ENCODE measurements at regions of chr11 and their contacts with region 1.

Region 1: DNA sequence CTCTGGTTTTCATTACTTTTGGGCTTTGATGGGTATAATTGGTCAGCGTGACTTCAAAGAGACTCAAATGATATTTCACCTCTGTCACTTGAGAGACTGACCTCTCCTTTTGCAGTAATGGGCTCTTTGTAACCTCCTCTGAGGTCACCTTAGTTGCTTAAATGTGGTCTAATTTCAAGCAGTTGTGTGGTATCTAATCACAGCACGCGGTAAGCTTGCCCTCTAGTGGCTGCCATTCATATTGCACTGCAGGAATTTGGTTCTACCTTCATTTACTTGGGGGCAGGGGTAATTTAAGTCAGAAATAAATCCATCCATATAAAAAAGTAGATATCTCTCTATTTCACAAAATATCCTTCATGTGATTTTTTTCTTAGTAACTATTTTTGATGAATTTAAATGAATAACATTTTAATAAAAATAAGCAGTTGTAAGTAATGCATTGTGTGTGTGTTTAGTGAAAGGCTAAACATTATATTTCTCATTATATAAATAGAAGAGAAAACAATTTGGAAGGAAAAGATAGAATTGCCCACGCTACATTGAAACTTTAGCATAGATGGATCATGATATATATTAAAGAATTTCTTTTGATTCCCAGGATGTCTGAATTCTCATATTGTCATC is 55.0 kb upstream of the ANO3 start:
- DNase-seq: peak; percentile 56
- H3K4me3 Mint-ChIP-seq: no peak overlapping the region
- H3K27ac Mint-ChIP-seq: no peak overlapping the region
- H3K4me1 Mint-ChIP-seq: no peaks in the 10 kb centered on the region
- H3K27me3 Mint-ChIP-seq: peaks cover 8% of the 10 kb centered on the region

Region 2: GRCh38 chr11:25981998-25982397 is 294.9 kb before region 1 on chr11:
- CTCF ChIA-PET with region 1: no interaction called
- POLR2A ChIA-PET with region 1: no interaction called
- intact Hi-C with region 1: loop called (anchors 5 kb)
- DNase-seq: no peak
- H3K4me3 Mint-ChIP-seq: no peak overlapping the region
- H3K27ac Mint-ChIP-seq: no peak overlapping the region
- H3K4me1 Mint-ChIP-seq: no peaks in the 10 kb centered on the region
- H3K27me3 Mint-ChIP-seq: no peaks in the 10 kb centered on the region